ENCODE measurements at regions of chr20 and their contacts with region 1.

Region 1: GRCh38 chr20:59006864-59007664 is at the start of gene CTSZ:
- DNase-seq: peak; percentile 39
- H3K4me3 Mint-ChIP-seq: peak within 1 kb of the TSS; percentile 81
- H3K27ac Mint-ChIP-seq: peak within 1 kb of the TSS; percentile 93
- H3K4me1 Mint-ChIP-seq: peaks cover 43% of the 10 kb centered on the region
- H3K27me3 Mint-ChIP-seq: no peaks in the 10 kb centered on the region
- total RNA-seq, gene CTSZ: 62.0 and 66.1 TPM in 2 replicates

Region 2: GRCh38 chr20:58986968-58987517 is 20.0 kb before region 1 on chr20:
- intact Hi-C with region 1: loop called (anchors 2 kb)
- DNase-seq: no peak
- H3K4me3 Mint-ChIP-seq: no peak overlapping the region
- H3K27ac Mint-ChIP-seq: peak overlapping the region; percentile 50
- H3K4me1 Mint-ChIP-seq: peaks cover 37% of the 10 kb centered on the region
- H3K27me3 Mint-ChIP-seq: no peaks in the 10 kb centered on the region

Measured in activated T-helper 2 cell treated with anti-CD3 and anti-CD28 coated beads, Interferon-gamma antibody, Interleukin-2, Interleukin-4, amounts not matched to agents 10 μg/mL and 5 μg/mL and 100 μg/mL, durations not matched to agents 14 hours and 24 hours and 36 hours (primary cell).